Endothelial cell of umbilical vein (primary cell): ENCODE measurements at regions of chr2 and their contacts with region 1.

Region 1: DNA sequence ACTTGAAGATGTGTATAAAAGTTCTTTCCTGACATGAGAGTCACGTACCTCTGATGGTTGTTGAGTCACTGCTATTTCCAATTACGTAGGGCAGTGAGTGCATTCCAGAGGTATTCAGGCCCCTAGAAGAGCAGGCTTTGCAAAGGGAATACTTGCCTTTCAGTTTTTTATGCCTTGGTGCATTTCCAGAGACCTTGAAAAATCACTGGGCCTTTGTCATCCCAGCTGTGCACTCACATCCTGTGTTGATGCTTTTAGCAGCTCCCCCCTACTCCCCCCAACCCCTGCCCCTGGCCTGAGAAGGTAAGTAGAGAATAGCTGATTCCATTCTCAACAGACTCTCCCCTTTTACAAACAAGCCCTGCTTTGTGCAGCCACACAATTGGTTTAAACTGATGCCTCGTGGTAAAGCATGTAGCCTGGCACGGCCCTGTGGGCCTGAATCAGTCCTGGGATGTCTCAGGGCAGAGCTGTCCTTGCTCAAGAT is 174.2 kb downstream of the PRPF40A start:
- DNase-seq: peak; percentile 93
- H3K4me3 ChIP-seq: no peak overlapping the region
- H3K27ac ChIP-seq: peak overlapping the region; percentile 89
- H3K4me1 ChIP-seq: peaks cover 26% of the 10 kb centered on the region
- H3K27me3 ChIP-seq: no peaks in the 10 kb centered on the region
- CTCF ChIP-seq: no peak
- POLR2A ChIP-seq: no peak

Region 2: GRCh38 chr2:152200562-152201465 is 342.2 kb before region 1 on chr2:
- CTCF ChIA-PET with region 1: no interaction called
- POLR2A ChIA-PET with region 1: no interaction called
- dilution Hi-C with region 1: no loop called
- intact Hi-C with region 1: loop called (anchors 5 kb)
- DNase-seq: peak; percentile 97
- H3K4me3 ChIP-seq: peak overlapping the region in 1 of 3 experiments; percentile 9
- H3K27ac ChIP-seq: peak overlapping the region; percentile 69
- H3K4me1 ChIP-seq: peaks cover 15% of the 10 kb centered on the region
- H3K27me3 ChIP-seq: no peaks in the 10 kb centered on the region
- CTCF ChIP-seq: no peak
- POLR2A ChIP-seq: peak; percentile 76

Region 3: DNA sequence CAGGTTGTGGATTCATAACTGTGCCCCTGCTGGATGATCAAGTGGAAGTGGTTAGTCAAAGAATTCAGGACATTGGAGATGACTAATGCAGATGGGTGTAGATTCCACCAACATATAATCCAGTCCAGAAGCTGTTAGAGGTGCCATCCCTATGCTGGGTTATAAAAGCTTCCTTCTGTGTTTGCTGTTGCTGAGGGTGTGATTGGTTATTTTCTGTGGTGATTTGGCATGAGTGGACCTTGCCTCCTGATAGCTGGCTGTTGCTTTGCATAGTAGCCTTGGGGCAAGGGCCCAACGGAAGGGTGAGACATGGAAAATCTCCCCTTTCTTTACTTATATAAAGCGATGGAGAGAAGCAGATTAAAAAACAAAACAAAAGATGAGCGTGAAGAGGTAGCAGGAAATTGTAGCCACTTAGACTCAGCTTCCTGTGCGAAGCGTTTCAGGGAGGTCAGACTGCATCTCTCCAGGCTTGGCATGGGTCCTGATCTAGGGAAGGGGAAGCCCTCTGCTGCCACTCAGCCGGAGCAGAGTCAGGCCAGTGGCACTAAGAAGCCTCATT is 17.7 kb before region 1 on chr2:
- CTCF ChIA-PET with region 1: interaction called, 9 read pairs
- POLR2A ChIA-PET with region 1: interaction called, 3 read pairs
- dilution Hi-C with region 1: no loop called
- intact Hi-C with region 1: loop called (anchors 1 kb)
- DNase-seq: peak; percentile 87
- H3K4me3 ChIP-seq: peak overlapping the region in 1 of 3 experiments; percentile 2
- H3K27ac ChIP-seq: peak overlapping the region; percentile 69
- H3K4me1 ChIP-seq: peaks cover 39% of the 10 kb centered on the region
- H3K27me3 ChIP-seq: no peaks in the 10 kb centered on the region
- CTCF ChIP-seq: no peak
- POLR2A ChIP-seq: no peak